ENCODE measurements at regions of chr17 and their contacts with region 1.

Region 1: DNA sequence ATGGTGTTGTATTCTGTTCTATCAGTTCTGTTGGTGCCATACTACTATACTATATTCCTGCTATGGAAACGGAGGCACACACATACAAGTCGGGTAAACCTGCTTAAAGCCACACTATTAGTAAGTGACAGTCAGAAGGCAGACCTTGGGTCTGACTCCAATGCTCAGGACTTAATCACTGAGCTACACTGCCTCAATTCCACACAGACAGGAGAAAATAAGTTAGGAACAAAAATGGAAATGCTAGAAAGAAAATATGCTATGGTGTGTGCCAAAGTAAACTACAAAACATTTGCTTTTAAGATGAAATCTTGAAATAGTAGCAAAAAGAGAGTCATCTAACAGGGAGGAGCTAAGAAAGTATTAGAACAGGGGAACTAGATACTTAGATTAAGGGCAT is 48.1 kb downstream of the MYO1D start:
- DNase-seq: no peak
- H3K4me3 ChIP-seq: peak overlapping the region; percentile 38
- H3K4me3 Mint-ChIP-seq: peak overlapping the region; percentile 89
- H3K27ac Mint-ChIP-seq: peak overlapping the region; percentile 77
- H3K4me1 ChIP-seq: peaks cover 89% of the 10 kb centered on the region
- H3K4me1 Mint-ChIP-seq: peaks cover 61% of the 10 kb centered on the region
- H3K27me3 ChIP-seq: no peaks in the 10 kb centered on the region
- H3K27me3 Mint-ChIP-seq: no peaks in the 10 kb centered on the region
- CTCF ChIP-seq: no peak

Region 2: DNA sequence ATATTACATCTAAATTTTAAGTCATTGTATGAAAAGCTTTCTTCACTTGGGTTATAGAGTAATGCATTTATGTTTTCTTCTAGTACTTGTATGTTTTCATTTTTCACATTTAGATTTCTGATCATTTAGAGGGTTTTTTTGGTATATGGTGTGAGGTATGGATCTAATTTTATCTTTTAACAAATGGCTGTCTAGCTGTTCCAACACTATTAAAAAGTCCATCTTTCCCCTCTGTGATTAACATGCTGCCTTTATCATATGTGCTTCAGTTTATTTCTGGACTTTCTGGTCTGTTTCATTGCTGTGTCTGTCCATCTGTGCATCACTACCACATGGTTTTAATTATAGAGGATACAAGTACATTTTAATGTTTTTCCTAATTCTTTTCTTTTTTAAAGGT is 115.7 kb before region 1 on chr17:
- CTCF ChIA-PET with region 1: no interaction called
- POLR2A ChIA-PET with region 1: no interaction called
- intact Hi-C with region 1: no loop called
- DNase-seq: no peak
- H3K4me3 ChIP-seq: no peak overlapping the region
- H3K4me3 Mint-ChIP-seq: no peak overlapping the region
- H3K27ac Mint-ChIP-seq: no peak overlapping the region
- H3K4me1 ChIP-seq: no peaks in the 10 kb centered on the region
- H3K4me1 Mint-ChIP-seq: no peaks in the 10 kb centered on the region
- H3K27me3 ChIP-seq: no peaks in the 10 kb centered on the region
- H3K27me3 Mint-ChIP-seq: no peaks in the 10 kb centered on the region
- CTCF ChIP-seq: no peak

Region 3: DNA sequence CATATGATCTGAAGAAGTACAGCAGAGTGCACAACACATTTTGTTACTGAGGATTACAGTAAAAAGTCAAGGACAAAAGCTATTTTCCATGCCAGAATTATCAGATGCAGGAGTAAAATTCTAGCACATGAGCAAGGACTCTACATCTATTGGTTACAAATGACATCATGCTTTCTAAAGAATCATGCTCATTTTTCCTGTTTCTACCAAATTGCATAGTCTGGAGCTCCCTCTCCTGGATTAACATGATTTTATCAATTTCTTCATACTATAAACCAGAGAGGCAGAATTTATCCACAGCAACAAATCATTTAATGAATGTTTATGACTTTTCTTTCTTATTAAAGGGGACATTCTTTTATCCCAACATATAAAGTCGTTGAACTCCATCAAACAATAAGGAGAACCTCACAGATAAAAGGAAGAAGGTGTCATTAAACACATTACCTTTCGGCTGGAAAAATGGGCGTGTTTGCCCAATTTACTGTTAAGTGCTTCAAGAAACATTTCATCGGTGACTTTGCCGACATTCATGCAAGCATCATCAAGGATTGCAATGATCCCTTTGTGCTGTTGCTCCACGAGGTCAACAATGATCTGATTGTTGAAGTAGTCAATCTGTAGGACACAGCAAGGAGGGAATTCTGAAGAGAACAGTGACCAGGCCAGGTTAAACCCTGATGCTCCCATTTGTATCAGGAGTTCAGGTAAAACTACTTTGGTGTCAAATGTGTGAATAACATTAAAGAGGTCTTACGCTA is 73.6 kb before region 1 on chr17:
- CTCF ChIA-PET with region 1: no interaction called
- POLR2A ChIA-PET with region 1: no interaction called
- intact Hi-C with region 1: no loop called
- DNase-seq: peak in 1 of 2 experiments; percentile 24
- H3K4me3 ChIP-seq: no peak overlapping the region
- H3K4me3 Mint-ChIP-seq: no peak overlapping the region
- H3K27ac Mint-ChIP-seq: no peak overlapping the region
- H3K4me1 ChIP-seq: no peaks in the 10 kb centered on the region
- H3K4me1 Mint-ChIP-seq: peaks cover 12% of the 10 kb centered on the region
- H3K27me3 ChIP-seq: no peaks in the 10 kb centered on the region
- H3K27me3 Mint-ChIP-seq: no peaks in the 10 kb centered on the region
- CTCF ChIP-seq: peak; percentile 19 to 50

Region 4: DNA sequence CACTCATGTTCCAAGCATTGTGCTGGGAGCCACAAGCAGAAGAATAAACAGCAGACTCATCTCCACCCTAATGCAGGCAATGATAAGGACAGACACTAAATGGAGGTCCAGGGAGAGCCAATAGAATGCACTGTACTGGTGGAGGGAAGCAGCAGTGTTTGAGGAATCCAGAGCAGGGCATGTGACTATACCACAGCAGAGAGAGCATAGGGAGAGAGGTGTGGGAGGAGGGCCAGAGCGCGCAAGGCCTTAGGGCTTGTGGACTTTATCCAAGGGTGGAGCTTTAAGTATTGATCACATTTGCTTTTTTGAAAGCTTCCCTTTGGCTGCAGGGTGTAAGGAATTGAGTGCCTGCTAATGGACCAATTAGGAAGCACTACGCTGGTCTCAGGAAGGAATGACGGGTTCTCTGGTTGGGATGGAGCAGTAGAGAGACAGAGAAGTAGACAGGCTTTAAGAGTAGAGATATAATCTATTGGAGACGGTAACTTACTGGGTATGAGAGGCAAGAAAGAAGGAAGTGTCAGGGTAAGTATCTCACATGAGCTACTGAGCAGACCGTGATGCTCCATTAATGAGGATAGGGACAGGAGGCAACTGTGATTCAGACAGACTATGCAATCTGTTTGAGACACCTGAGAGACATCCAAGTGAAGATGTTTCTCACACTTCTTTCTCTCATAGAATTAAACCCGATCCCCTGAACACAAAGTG is 34.1 kb before region 1 on chr17:
- CTCF ChIA-PET with region 1: interaction called, 4 read pairs
- POLR2A ChIA-PET with region 1: interaction called, 5 read pairs
- intact Hi-C with region 1: loop called (anchors 1 kb)
- DNase-seq: peak; percentile 83 to 86
- H3K4me3 ChIP-seq: peak overlapping the region; percentile 1; the same call in 1 of the 2 replicates
- H3K4me3 Mint-ChIP-seq: peak overlapping the region; percentile 45
- H3K27ac Mint-ChIP-seq: peak overlapping the region; percentile 71
- H3K4me1 ChIP-seq: peaks cover 54% of the 10 kb centered on the region
- H3K4me1 Mint-ChIP-seq: peaks cover 31% of the 10 kb centered on the region
- H3K27me3 ChIP-seq: no peaks in the 10 kb centered on the region
- H3K27me3 Mint-ChIP-seq: no peaks in the 10 kb centered on the region
- CTCF ChIP-seq: no peak

Region 5: DNA sequence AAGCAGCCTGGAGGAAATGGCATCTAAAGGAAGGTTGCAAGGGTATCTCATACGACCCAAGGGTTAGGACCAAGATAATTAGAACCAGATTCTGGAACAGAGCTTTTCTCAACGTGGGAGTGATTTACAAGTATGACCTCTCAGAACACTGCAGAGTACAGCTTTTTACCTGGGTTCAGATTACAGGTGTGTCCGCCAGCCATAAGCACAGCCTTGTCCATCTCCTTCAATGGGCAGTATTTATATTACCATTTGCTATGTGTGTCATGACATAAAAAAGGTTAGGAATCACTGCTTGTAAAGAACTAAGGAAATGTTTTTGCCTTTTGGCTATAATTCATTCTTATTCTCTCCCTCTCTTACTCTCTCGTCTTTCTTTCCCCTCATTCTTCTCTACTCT is 11.4 kb after region 1 on chr17:
- CTCF ChIA-PET with region 1: no interaction called
- POLR2A ChIA-PET with region 1: no interaction called
- intact Hi-C with region 1: no loop called
- DNase-seq: no peak
- H3K4me3 ChIP-seq: no peak overlapping the region
- H3K4me3 Mint-ChIP-seq: no peak overlapping the region
- H3K27ac Mint-ChIP-seq: peak overlapping the region; percentile 1
- H3K4me1 ChIP-seq: peaks cover 60% of the 10 kb centered on the region
- H3K4me1 Mint-ChIP-seq: peaks cover 39% of the 10 kb centered on the region
- H3K27me3 ChIP-seq: no peaks in the 10 kb centered on the region
- H3K27me3 Mint-ChIP-seq: no peaks in the 10 kb centered on the region
- CTCF ChIP-seq: no peak

Region 6: DNA sequence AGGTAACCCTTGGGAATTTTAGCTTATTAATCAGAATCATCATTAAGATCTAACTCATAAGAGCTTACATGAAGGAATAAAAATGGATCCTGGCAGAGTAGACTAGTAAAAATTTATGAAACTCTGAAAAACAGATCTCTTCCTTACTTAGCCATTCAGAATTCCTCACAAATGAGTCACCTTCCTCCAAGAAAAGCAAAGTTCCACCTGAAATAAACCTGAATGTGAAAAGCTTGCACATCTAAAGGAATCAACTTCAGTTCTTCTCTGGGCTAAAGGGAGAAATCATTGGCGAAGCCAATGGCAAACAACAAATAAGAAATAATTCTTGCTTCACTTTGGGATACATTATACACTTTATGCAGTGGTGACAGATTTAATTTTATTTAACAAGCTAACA is 25.4 kb after region 1 on chr17:
- CTCF ChIA-PET with region 1: interaction called, 3 read pairs
- POLR2A ChIA-PET with region 1: no interaction called
- intact Hi-C with region 1: loop called (anchors 2 kb)
- DNase-seq: no peak
- H3K4me3 ChIP-seq: no peak overlapping the region
- H3K4me3 Mint-ChIP-seq: no peak overlapping the region
- H3K27ac Mint-ChIP-seq: no peak overlapping the region
- H3K4me1 ChIP-seq: peaks cover 65% of the 10 kb centered on the region
- H3K4me1 Mint-ChIP-seq: peaks cover 25% of the 10 kb centered on the region
- H3K27me3 ChIP-seq: no peaks in the 10 kb centered on the region
- H3K27me3 Mint-ChIP-seq: no peaks in the 10 kb centered on the region
- CTCF ChIP-seq: no peak

Region 7: DNA sequence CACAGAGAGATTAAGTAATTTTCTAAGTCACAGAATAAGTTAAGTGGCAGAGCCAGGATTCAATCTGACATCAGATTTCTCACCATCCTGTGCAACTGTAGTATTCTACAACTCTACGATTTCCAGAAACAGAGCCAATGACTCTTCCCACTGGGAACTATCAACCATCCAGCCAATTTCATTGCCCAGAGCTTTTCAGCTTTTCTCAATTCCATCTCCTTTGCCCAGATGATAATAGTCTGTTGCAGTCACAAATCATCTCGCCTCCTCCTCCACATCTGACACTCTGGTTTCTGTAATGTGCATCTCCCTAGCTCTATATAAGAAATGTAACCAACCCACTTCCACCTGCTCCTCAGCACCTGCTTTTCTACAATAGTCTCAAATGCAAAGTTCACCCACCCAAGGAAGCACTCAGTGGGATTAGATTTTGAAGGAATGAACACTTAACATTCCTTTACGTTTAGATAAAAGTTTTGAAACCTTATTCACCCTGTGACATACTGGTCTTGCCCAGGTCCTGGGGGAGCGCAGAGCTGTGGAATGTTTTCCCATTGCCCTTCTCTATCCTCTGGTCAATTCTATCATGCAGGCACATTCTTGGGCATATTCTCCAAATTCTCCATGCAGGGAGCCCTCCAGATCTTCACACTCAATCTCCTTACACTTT is 632.1 kb after region 1 on chr17:
- CTCF ChIA-PET with region 1: no interaction called
- POLR2A ChIA-PET with region 1: interaction called, 11 read pairs
- intact Hi-C with region 1: no loop called
- DNase-seq: no peak
- H3K4me3 ChIP-seq: no peak overlapping the region
- H3K4me3 Mint-ChIP-seq: no peak overlapping the region
- H3K27ac Mint-ChIP-seq: no peak overlapping the region
- H3K4me1 ChIP-seq: 0 out of 2 replicates have a peak, but pooled peaks cover 4% of the 10 kb centered on the region
- H3K4me1 Mint-ChIP-seq: no peaks in the 10 kb centered on the region
- H3K27me3 ChIP-seq: no peaks in the 10 kb centered on the region
- H3K27me3 Mint-ChIP-seq: peaks cover 20% of the 10 kb centered on the region
- CTCF ChIP-seq: no peak

Measured in Caco-2 (cell line).